Heart right ventricle (tissue), 16 donors: ENCODE measurements at regions of chr6 and their contacts with region 1.

Region 1: GRCh38 chr6:168616816-168617765 is 176.1 kb downstream of the SMOC2 start:
- DNase-seq: peak in 1 of 2 donors; percentile 39
- ATAC-seq: peak; percentile 53 to 91 (median 74)
- H3K4me3 ChIP-seq: no peak overlapping the region
- H3K27ac ChIP-seq: peak overlapping the region in 6 of 10 donors; percentile 15 to 50 (median 40)
- H3K4me1 ChIP-seq: peaks cover 0 to 17% (median 0%) of the 10 kb centered on the region in 9 donors
- H3K27me3 ChIP-seq: no peaks in the 10 kb centered on the region
- CTCF ChIP-seq: peak in 8 of 9 donors; percentile 11 to 57 (median 38)

Region 2: GRCh38 chr6:168514216-168514615 is 102.9 kb before region 1 on chr6:
- intact Hi-C with region 1: no loop called
- DNase-seq: peak; percentile 70 to 85
- ATAC-seq: peak; percentile 59 to 89 (median 78)
- H3K4me3 ChIP-seq: no peak overlapping the region
- H3K27ac ChIP-seq: peak overlapping the region in 5 of 10 donors; percentile 7 to 55 (median 29)
- H3K4me1 ChIP-seq: peaks cover 0 to 19% (median 0%) of the 10 kb centered on the region in 9 donors
- H3K27me3 ChIP-seq: peaks cover 0 to 12% (median 0%) of the 10 kb centered on the region in 7 donors
- CTCF ChIP-seq: no peak

Region 3: GRCh38 chr6:168877821-168878282 is 260.8 kb after region 1 on chr6:
- intact Hi-C with region 1: loop called in 6 of 10 experiments (anchors 5 to 10 kb)
- DNase-seq: no peak
- ATAC-seq: peak in 7 of 8 donors; percentile 20 to 87 (median 60)
- H3K4me3 ChIP-seq: no peak overlapping the region
- H3K27ac ChIP-seq: no peak overlapping the region
- H3K4me1 ChIP-seq: peaks cover 0 to 4% (median 0%) of the 10 kb centered on the region in 9 donors
- H3K27me3 ChIP-seq: peaks cover 0 to 34% (median 8%) of the 10 kb centered on the region in 7 donors
- CTCF ChIP-seq: no peak